Activated CD8-positive, alpha-beta memory T cell treated with anti-CD3 and anti-CD28 coated beads, Interleukin-2, amount 10 ng/mL, durations not matched to agents 7 days and 5 days (primary cell): ENCODE measurements at regions of chr10 and their contacts with region 1.

Region 1: DNA sequence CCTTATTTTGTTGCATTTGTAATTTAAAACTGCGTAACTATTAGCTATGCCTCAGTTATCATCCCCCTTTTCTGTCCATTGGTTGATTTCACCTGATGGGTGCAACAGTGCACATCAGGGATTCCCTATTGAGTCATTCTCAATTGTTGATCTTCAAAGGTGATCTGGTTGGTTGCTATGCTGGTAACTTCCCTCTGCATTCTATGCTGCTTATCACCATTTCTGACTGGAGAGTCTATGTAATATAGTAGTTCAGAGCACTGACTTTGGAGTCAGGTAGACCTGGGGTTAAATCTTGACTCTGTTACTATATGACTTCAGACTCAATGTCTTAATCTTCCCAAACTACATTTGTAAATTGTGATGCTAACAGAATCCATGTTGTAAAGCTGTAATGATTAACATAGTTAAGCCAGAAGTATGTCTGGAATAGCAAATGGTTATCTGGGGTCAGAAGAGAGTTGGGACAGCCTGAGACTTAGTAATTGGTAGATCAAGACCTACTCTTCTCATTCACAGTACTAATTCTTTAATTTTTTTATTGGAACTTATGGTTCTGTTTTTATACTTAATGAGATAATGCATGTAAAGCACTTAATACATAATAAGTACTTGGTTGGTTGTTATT is 38.1 kb downstream of the EXOC6 start:
- DNase-seq: no peak
- ATAC-seq: no peak
- H3K4me3 Mint-ChIP-seq: no peak overlapping the region
- H3K27ac Mint-ChIP-seq: no peak overlapping the region
- H3K4me1 Mint-ChIP-seq: no peaks in the 10 kb centered on the region
- H3K27me3 Mint-ChIP-seq: no peaks in the 10 kb centered on the region

Region 2: GRCh38 chr10:92848441-92849233 is 37.8 kb before region 1 on chr10 and contains the start of gene EXOC6:
- CTCF ChIA-PET with region 1: interaction called, 11 read pairs
- DNase-seq: peak; percentile 90
- ATAC-seq: peak; percentile 88
- H3K4me3 Mint-ChIP-seq: peak within 1 kb of the TSS; percentile 78
- H3K27ac Mint-ChIP-seq: peak within 1 kb of the TSS; percentile 86
- H3K4me1 Mint-ChIP-seq: peaks cover 29% of the 10 kb centered on the region
- H3K27me3 Mint-ChIP-seq: no peaks in the 10 kb centered on the region
- total RNA-seq, gene EXOC6: 11.9 to 12.1 TPM